PC-9 (cell line): ENCODE measurements at regions of chr5 and their contacts with region 1.

Region 1: GRCh38 chr5:34474573-34475021 is 181.5 kb upstream of the RAI14 start:
- DNase-seq: peak; percentile 51 to 59
- H3K4me3 ChIP-seq: no peak overlapping the region
- H3K27ac ChIP-seq: no peak overlapping the region
- H3K4me1 ChIP-seq: no peaks in the 10 kb centered on the region
- H3K27me3 ChIP-seq: no peaks in the 10 kb centered on the region
- CTCF ChIP-seq: peak; percentile 100

Region 2: DNA sequence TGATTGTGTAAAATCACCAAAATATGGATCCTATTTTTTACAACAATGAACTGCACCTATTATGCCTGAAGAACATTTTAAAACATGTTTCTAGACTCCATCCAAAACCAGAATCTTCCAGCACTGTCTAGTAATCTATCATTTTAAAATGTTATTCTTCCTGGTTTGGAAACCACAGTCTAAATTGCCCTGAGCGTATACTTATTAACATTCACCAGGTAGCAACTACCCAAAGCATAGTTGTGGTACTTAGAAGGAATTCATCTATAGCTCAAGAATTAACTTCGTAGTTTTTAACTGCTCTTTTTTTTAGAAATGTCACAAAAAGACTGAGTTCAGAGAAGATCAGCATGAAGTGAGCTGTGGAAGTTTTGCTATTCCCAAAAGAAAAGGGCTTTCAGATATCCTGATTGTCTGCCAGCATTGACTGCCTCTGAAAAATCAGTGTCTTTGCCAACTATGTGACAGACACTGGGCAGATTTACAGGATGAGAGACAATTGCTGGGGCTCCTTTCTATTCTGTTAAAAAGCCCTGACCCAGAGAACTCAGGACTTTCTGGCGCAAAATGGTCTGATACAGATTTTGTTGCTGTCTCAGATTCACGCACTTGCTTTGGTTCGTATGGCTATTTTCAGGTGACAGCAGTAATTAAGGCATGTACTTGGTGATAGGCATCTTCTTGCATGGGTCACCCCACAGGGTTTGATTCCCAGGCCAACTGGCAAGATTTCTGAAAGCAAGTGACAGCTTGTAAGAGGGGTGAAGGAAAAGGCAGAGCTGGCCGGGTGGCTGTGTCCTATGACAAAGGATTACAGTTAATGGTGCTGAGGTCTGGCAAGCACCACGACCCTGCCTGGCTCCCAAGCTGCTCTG is 29.0 kb after region 1 on chr5:
- CTCF ChIA-PET with region 1: no interaction called
- POLR2A ChIA-PET with region 1: no interaction called
- intact Hi-C with region 1: no loop called
- DNase-seq: no peak
- H3K4me3 ChIP-seq: no peak overlapping the region
- H3K27ac ChIP-seq: no peak overlapping the region
- H3K4me1 ChIP-seq: peaks cover 38% of the 10 kb centered on the region
- H3K27me3 ChIP-seq: no peaks in the 10 kb centered on the region
- CTCF ChIP-seq: no peak

Region 3: GRCh38 chr5:34898258-34898895 is 423.8 kb after region 1 on chr5:
- CTCF ChIA-PET with region 1: interaction called, 4 read pairs
- POLR2A ChIA-PET with region 1: no interaction called
- intact Hi-C with region 1: loop called (anchors 1 kb)
- DNase-seq: peak; percentile 71 to 84
- H3K4me3 ChIP-seq: no peak overlapping the region
- H3K27ac ChIP-seq: no peak overlapping the region
- H3K4me1 ChIP-seq: peaks cover 17% of the 10 kb centered on the region
- H3K27me3 ChIP-seq: no peaks in the 10 kb centered on the region
- CTCF ChIP-seq: peak; percentile 98

Region 4: DNA sequence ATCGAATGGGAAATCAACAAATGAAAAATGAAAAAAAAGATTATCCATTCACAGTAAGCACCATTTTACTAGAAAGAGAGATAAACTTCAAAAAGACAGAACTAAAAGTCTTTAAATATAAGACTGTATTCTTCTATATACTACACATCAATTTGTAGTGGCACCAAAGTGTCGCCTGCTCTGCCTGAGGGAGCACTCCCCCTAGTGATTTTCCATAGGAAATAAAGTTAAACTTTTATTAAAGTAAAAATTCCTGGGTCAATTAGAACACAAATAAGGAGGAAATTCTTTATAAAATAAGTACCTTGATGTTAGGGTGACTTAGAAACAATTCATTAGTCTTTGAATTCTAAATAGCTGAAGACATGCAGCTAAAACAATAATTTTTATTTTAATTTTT is 431.0 kb after region 1 on chr5:
- CTCF ChIA-PET with region 1: interaction called, 7 read pairs
- POLR2A ChIA-PET with region 1: interaction called, 11 read pairs
- intact Hi-C with region 1: no loop called
- DNase-seq: no peak
- H3K4me3 ChIP-seq: no peak overlapping the region
- H3K27ac ChIP-seq: no peak overlapping the region
- H3K4me1 ChIP-seq: no peaks in the 10 kb centered on the region
- H3K27me3 ChIP-seq: no peaks in the 10 kb centered on the region
- CTCF ChIP-seq: peak; percentile 65

Region 5: DNA sequence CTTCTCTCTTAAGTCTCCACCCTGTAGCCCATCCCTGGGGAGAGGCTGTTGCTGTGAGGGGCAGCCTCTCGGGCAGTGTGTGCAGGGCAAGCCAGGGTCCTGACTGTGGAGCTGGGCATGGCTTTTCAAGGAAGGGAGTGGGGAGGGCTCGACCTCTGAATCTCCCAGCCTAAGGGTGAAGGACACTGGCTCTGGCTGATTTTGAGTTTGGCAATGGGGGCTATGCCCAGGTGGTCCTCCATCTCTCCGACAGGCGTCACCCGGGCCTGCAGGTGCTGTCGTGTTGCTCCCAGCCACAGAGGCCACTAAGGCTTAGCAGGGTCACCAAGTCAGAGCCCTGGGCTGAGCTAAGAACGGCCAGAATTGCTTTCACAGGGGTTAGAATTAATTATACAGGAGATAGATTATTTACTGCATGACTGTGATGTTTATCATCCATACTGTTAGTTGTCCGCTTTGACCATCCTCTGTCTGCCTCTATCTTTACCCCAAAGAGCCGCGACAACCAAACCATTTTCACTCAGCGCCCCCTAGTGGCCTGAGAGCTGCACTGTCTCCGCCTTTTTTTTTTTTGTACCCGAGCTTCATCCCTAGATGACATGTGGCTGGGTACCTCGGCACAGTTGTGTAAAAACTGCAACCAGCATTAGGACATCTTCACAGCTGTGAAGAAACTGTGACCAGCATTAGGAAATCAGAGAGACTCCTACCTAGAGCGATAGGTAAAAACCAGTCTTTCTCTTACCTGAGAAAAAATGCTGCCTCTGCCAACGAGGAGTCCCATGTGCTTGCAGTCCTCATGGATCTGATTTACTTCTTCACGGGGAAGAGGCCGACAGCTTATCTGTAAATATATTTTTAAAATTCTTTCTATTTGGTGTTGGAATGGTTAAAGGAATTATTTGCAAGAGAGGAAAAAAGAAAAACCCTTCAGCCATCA is 528.7 kb after region 1 on chr5:
- CTCF ChIA-PET with region 1: interaction called, 4 read pairs
- POLR2A ChIA-PET with region 1: no interaction called
- intact Hi-C with region 1: loop called (anchors 1 kb)
- DNase-seq: peak; percentile 56 to 81
- H3K4me3 ChIP-seq: no peak overlapping the region
- H3K27ac ChIP-seq: no peak overlapping the region
- H3K4me1 ChIP-seq: no peaks in the 10 kb centered on the region
- H3K27me3 ChIP-seq: peaks cover 48% of the 10 kb centered on the region
- CTCF ChIP-seq: peak; percentile 99

Region 6: GRCh38 chr5:35089334-35090314 is 615.0 kb after region 1 on chr5:
- CTCF ChIA-PET with region 1: no interaction called
- POLR2A ChIA-PET with region 1: no interaction called
- intact Hi-C with region 1: loop called (anchors 10 kb)
- DNase-seq: peak; percentile 44 to 46
- H3K4me3 ChIP-seq: no peak overlapping the region
- H3K27ac ChIP-seq: no peak overlapping the region
- H3K4me1 ChIP-seq: no peaks in the 10 kb centered on the region
- H3K27me3 ChIP-seq: peaks cover 72% of the 10 kb centered on the region
- CTCF ChIP-seq: peak; percentile 80

Region 7: DNA sequence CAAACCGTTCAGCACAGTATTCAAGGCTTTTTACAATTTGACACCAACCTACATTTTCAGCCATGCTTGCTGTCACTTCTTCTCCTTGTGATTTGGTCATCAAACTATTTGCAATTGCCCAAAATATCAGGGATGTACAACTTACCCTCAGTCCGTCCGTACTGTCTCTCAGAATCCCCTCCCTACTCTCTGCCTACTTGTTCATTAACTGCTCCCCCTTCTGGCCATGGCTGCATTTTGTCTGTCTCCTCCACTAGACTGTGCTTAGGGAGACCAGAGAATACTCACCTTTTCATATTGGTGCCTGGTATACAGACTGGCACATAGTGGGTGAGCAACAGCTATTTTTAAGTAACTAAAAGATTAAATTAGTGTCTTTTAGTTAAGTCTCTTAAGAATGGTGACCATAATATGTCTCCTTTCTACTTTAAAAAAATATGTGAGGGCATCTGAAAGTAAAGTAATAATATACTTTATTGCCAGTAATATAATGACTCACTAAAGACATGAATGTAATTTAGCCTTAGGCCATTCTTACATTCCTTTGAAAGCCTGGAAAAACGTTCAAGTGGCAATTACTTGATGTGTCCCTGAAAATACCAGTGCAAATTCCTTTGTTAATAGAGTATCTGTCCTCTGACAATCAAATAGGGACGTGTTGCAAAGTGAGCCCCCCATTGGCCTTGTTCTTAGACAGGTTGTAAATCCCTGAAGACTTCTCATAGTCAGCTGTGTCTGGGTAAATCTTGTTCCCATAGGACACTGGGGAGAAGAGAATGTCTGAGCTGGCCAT is 727.9 kb after region 1 on chr5:
- CTCF ChIA-PET with region 1: no interaction called
- POLR2A ChIA-PET with region 1: no interaction called
- intact Hi-C with region 1: loop called (anchors 5 kb)
- DNase-seq: peak in 1 of 2 experiments; percentile 41
- H3K4me3 ChIP-seq: no peak overlapping the region
- H3K27ac ChIP-seq: no peak overlapping the region
- H3K4me1 ChIP-seq: no peaks in the 10 kb centered on the region
- H3K27me3 ChIP-seq: peaks cover 32% of the 10 kb centered on the region
- CTCF ChIP-seq: peak; percentile 67